ENCODE measurements at regions of chr10 and their contacts with region 1.

Region 1: DNA sequence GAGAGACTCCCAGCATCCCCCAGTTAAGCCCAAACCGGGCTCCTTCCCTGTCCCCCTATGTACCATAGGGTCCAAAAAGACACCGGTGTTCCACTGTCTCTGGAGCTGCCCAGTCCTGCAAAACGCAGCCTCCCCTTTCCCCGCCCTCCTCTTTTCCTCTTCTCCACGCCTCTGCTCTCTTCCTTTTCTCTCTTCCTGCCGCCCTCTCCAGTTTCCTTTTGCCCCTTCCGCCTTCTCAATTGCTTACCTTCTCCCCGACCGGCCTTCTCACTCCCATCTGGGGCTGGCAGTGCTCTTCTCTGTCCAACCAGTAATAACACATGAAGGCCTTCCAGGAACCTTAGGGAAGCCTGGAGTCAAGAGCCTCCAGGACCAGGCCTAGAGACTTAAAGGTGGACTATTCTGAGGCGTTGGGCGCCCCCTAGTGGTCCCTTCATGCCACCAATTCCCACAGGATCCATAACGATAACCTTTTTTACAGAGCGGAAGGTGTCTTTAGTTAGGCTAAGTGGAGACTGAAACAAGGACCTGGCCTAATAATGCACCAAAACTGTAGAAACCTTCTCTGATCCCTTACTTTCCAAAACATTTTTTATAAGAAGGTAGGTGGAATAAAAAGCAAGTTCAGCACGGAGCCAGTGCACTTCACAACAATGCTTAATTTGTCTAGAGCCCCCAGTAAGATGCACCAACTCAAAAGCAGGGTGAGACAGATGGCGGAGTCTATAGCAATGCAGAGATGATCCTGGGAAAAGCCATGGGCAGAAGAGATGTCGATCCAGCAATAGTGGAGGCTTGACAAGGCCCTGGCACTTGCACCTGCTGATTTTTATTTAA is 27.2 kb upstream of the MSRB2 start:
- DNase-seq: peak; percentile 83
- ATAC-seq: peak; percentile 88
- H3K4me3 Mint-ChIP-seq: no peak overlapping the region
- H3K27ac Mint-ChIP-seq: no peak overlapping the region
- H3K4me1 Mint-ChIP-seq: peaks cover 4% of the 10 kb centered on the region
- H3K27me3 Mint-ChIP-seq: peaks cover 2% of the 10 kb centered on the region

Region 2: DNA sequence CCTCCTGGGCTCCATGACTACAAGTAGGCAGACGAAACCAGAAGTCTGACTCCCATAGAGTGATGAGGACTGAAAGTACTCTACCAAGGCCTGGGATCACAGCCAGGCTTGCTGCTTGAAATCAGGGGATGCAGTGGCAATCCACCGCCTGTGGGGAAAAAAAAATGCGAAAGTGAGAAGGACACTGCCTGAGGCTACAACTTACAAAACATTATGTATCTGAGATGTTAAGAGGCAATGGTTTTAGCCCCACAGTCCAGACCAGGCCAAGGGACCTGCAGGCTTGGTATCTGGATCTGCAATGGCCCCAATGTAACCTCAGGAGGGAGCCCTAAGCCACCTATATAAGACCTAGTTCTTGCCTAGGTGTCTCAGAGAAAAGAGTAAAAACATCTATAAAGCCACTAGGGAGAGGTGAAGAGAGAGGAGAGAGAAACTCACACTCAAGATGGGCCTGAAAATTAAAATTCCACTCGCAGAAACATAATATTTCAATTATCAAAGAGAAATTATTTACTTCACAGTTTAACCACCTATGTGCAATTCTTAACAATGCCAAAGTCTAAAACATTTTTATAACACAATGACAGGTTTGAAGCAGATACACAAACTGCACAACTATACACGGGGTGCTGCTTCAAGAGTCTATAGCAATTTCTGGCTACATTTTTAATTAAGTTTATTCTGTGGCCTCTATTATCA is 1078.6 kb before region 1 on chr10:
- CTCF ChIA-PET with region 1: interaction called, 3 read pairs
- POLR2A ChIA-PET with region 1: no interaction called
- intact Hi-C with region 1: loop called in 1 of 2 experiments (anchors 1 kb)
- DNase-seq: peak; percentile 57
- ATAC-seq: peak; percentile 94
- H3K4me3 Mint-ChIP-seq: no peak overlapping the region
- H3K27ac Mint-ChIP-seq: no peak overlapping the region
- H3K4me1 Mint-ChIP-seq: peaks cover 2% of the 10 kb centered on the region
- H3K27me3 Mint-ChIP-seq: no peaks in the 10 kb centered on the region

Region 3: GRCh38 chr10:22218451-22218850 is 849.7 kb before region 1 on chr10:
- CTCF ChIA-PET with region 1: no interaction called
- POLR2A ChIA-PET with region 1: no interaction called
- intact Hi-C with region 1: loop called in 1 of 2 experiments (anchors 10 kb)
- DNase-seq: peak; percentile 13
- ATAC-seq: no peak
- H3K4me3 Mint-ChIP-seq: no peak overlapping the region
- H3K27ac Mint-ChIP-seq: no peak overlapping the region
- H3K4me1 Mint-ChIP-seq: peaks cover 26% of the 10 kb centered on the region
- H3K27me3 Mint-ChIP-seq: peaks cover 3% of the 10 kb centered on the region

Region 4: GRCh38 chr10:22550732-22551131 is 517.4 kb before region 1 on chr10:
- CTCF ChIA-PET with region 1: interaction called, 5 read pairs
- POLR2A ChIA-PET with region 1: no interaction called
- intact Hi-C with region 1: loop called in 1 of 2 experiments (anchors 1 kb)
- DNase-seq: peak; percentile 81
- ATAC-seq: no peak
- H3K4me3 Mint-ChIP-seq: no peak overlapping the region
- H3K27ac Mint-ChIP-seq: no peak overlapping the region
- H3K4me1 Mint-ChIP-seq: peaks cover 13% of the 10 kb centered on the region
- H3K27me3 Mint-ChIP-seq: no peaks in the 10 kb centered on the region

Region 5: DNA sequence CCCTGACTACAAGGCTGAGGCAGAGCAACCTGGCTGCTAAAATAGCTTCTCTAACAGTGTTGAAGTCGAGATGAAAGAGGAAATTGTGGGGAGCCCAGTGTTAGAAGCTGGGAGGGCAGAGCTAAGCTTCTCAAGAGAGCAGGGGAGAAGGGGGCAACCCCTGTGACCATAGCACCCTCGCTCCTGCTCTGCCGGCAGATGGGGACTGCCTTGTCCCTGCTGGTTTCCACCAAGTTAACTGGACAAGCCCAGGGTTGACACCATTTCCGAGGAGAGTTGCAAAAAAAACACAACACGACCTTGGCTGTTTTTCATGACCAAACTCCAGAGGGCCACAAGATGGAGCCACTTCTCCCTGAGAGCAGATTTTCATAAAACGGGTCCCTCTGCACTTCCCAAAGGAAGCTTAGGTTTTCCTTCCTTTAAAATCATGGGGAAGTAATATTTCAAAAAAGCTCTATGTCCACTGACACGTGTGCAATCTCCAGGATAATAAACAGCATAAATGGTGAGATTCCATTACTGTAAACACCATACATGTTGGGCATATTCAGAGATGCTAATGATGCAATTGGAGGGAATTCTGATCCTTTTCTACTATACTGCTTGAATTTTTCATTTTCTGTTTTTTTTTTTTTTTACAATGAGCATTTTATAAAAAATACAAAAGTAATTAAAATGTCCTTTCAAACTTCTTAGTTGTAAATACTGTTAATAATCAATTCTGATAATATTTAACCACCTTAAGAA is 494.2 kb before region 1 on chr10:
- CTCF ChIA-PET with region 1: no interaction called
- POLR2A ChIA-PET with region 1: no interaction called
- intact Hi-C with region 1: loop called in 1 of 2 experiments (anchors 5 kb)
- DNase-seq: peak; percentile 37
- ATAC-seq: no peak
- H3K4me3 Mint-ChIP-seq: no peak overlapping the region
- H3K27ac Mint-ChIP-seq: no peak overlapping the region
- H3K4me1 Mint-ChIP-seq: peaks cover 46% of the 10 kb centered on the region
- H3K27me3 Mint-ChIP-seq: no peaks in the 10 kb centered on the region

Region 6: DNA sequence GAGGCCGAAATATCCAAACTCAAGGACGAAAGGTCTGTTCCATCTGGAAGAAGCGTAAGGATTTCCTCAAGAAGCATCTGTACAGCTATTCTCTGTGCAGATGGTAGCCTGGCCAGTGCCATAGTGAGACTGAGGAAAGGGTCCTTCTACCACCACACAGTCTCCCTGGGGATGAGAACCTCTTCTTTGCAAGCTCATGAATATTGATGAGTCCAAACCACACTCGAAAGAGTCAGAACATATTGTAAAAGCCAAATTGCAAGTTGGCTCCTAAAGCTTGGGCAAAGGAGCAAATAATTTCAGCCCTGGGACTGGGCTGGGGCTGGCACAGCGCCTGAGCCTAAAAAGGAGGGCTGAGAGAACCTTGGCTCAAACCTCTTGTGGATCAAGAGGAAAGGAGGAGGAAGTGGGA is 287.7 kb before region 1 on chr10:
- CTCF ChIA-PET with region 1: no interaction called
- POLR2A ChIA-PET with region 1: no interaction called
- intact Hi-C with region 1: no loop called
- DNase-seq: no peak
- ATAC-seq: no peak
- H3K4me3 Mint-ChIP-seq: no peak overlapping the region
- H3K27ac Mint-ChIP-seq: no peak overlapping the region
- H3K4me1 Mint-ChIP-seq: peaks cover 5% of the 10 kb centered on the region
- H3K27me3 Mint-ChIP-seq: no peaks in the 10 kb centered on the region

Region 7: DNA sequence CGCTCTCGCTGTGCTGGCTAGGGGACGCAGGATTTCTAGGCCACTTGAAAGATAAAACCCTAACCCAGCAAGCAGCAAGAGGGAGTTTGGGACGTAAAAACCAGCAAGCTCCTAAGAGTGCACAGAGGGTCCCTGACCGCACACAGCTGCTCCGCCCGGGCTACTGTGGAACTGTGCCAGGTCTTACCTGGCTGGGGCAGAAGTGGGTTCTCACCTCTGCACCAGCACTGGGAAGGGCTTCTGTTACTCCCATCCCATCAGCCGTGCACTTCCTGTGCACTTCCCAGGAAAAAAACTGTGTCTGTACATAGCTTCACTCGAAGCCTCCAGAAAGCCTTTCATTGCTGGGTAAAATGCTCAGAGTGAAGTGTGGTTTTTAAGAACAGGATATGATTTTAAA is 78.1 kb after region 1 on chr10:
- CTCF ChIA-PET with region 1: no interaction called
- POLR2A ChIA-PET with region 1: no interaction called
- intact Hi-C with region 1: no loop called
- DNase-seq: no peak
- ATAC-seq: no peak
- H3K4me3 Mint-ChIP-seq: no peak overlapping the region
- H3K27ac Mint-ChIP-seq: no peak overlapping the region
- H3K4me1 Mint-ChIP-seq: no peaks in the 10 kb centered on the region
- H3K27me3 Mint-ChIP-seq: peaks cover 5% of the 10 kb centered on the region

Measured in activated CD4-positive, alpha-beta T cell treated with anti-CD3 and anti-CD28 coated beads for 36 hours (primary cell).